ENCODE measurements at regions of chr2 and their contacts with region 1.

Region 1: GRCh38 chr2:74876081-74876886 is 42.4 kb downstream of the HK2 start:
- DNase-seq: peak; percentile 48 to 73 (median 66)
- H3K4me3 ChIP-seq: no peak overlapping the region
- H3K4me3 Mint-ChIP-seq: no peak overlapping the region
- H3K27ac ChIP-seq: no peak overlapping the region
- H3K27ac Mint-ChIP-seq: peak overlapping the region in 3 of 7 donors; percentile 22 to 76 (median 53)
- H3K4me1 ChIP-seq: peaks cover 3% of the 10 kb centered on the region
- H3K4me1 Mint-ChIP-seq: peaks cover 0 to 7% (median 4%) of the 10 kb centered on the region in 4 donors
- H3K27me3 ChIP-seq: no peaks in the 10 kb centered on the region
- H3K27me3 Mint-ChIP-seq: no peaks in the 10 kb centered on the region

Region 2: DNA sequence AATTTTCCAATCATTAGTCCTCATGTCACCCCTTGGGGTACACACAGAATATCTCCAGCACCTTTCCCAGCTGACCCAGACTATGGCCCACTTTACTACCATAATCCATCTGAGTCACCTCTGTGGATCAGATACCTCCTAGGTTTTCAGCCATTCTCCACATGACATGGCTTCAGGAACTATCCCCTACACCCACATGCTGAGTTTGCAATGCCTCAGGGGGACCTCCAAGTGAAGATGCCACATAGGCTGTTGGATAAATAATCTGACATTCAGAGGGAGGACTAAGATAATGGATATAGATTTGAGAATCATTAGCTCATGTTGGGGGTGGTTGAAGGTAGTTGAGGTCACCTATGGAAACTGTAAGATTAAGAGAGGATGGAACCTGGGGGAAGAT is 177.0 kb before region 1 on chr2:
- CTCF ChIA-PET with region 1: interaction called, 10 read pairs
- POLR2A ChIA-PET with region 1: no interaction called
- intact Hi-C with region 1: no loop called
- DNase-seq: no peak
- H3K4me3 ChIP-seq: no peak overlapping the region
- H3K4me3 Mint-ChIP-seq: no peak overlapping the region
- H3K27ac ChIP-seq: no peak overlapping the region
- H3K27ac Mint-ChIP-seq: no peak overlapping the region
- H3K4me1 ChIP-seq: no peaks in the 10 kb centered on the region
- H3K4me1 Mint-ChIP-seq: peaks cover 0 to 2% (median 0%) of the 10 kb centered on the region in 4 donors
- H3K27me3 ChIP-seq: no peaks in the 10 kb centered on the region
- H3K27me3 Mint-ChIP-seq: peaks cover 0 to 1% of the 10 kb centered on the region in 2 donors

Region 3: GRCh38 chr2:74715078-74715791 is 161.0 kb before region 1 on chr2:
- CTCF ChIA-PET with region 1: interaction called, 287 read pairs
- POLR2A ChIA-PET with region 1: interaction called, 5 read pairs
- intact Hi-C with region 1: loop called (anchors 1 kb)
- DNase-seq: peak; percentile 70 to 78 (median 75)
- H3K4me3 ChIP-seq: peak overlapping the region in 1 of 2 donors; percentile 34
- H3K4me3 Mint-ChIP-seq: peak overlapping the region; percentile 84 to 92 (median 88)
- H3K27ac ChIP-seq: no peak overlapping the region
- H3K27ac Mint-ChIP-seq: peak overlapping the region in 2 of 7 donors; percentile 29 to 46
- H3K4me1 ChIP-seq: peaks cover 6% of the 10 kb centered on the region
- H3K4me1 Mint-ChIP-seq: peaks cover 5 to 10% (median 7%) of the 10 kb centered on the region in 4 donors
- H3K27me3 ChIP-seq: peaks cover 15% of the 10 kb centered on the region
- H3K27me3 Mint-ChIP-seq: peaks cover 6 to 10% of the 10 kb centered on the region in 2 donors

Region 4: DNA sequence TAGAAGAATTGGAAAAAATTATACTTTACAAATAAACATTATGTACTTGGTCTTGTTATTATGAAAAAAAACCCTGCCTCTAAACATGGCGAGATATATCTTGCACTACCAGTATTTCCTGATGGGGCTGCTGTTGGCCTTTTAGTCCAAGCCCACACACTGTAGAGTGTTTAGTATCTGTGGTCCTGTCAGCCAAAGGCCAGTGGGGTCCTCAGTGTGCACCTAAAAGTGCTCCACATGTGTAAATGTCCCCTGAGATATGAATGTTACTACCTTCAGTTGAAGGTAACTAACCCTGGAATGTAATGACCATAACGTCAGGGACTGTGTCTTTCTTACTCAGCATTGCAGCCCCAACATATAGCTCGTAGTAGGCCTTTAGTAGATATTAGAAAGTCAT is 113.5 kb before region 1 on chr2:
- CTCF ChIA-PET with region 1: interaction called, 12 read pairs
- POLR2A ChIA-PET with region 1: no interaction called
- intact Hi-C with region 1: no loop called
- DNase-seq: no peak
- H3K4me3 ChIP-seq: no peak overlapping the region
- H3K4me3 Mint-ChIP-seq: no peak overlapping the region
- H3K27ac ChIP-seq: no peak overlapping the region
- H3K27ac Mint-ChIP-seq: no peak overlapping the region
- H3K4me1 ChIP-seq: no peaks in the 10 kb centered on the region
- H3K4me1 Mint-ChIP-seq: peaks cover 0 to 12% (median 6%) of the 10 kb centered on the region in 4 donors
- H3K27me3 ChIP-seq: no peaks in the 10 kb centered on the region
- H3K27me3 Mint-ChIP-seq: peaks cover 0 to 3% of the 10 kb centered on the region in 2 donors

Region 5: GRCh38 chr2:74845217-74846011 is 30.9 kb before region 1 on chr2:
- CTCF ChIA-PET with region 1: interaction called, 147 read pairs
- POLR2A ChIA-PET with region 1: interaction called, 7 read pairs
- intact Hi-C with region 1: no loop called
- DNase-seq: peak in 1 of 5 donors; percentile 57
- H3K4me3 ChIP-seq: no peak overlapping the region
- H3K4me3 Mint-ChIP-seq: peak overlapping the region; percentile 75 to 94 (median 80)
- H3K27ac ChIP-seq: peak overlapping the region; percentile 12
- H3K27ac Mint-ChIP-seq: peak overlapping the region; percentile 85 to 94 (median 90)
- H3K4me1 ChIP-seq: peaks cover 98% of the 10 kb centered on the region
- H3K4me1 Mint-ChIP-seq: peaks cover 62 to 100% (median 89%) of the 10 kb centered on the region in 4 donors
- H3K27me3 ChIP-seq: no peaks in the 10 kb centered on the region
- H3K27me3 Mint-ChIP-seq: no peaks in the 10 kb centered on the region

Region 6: DNA sequence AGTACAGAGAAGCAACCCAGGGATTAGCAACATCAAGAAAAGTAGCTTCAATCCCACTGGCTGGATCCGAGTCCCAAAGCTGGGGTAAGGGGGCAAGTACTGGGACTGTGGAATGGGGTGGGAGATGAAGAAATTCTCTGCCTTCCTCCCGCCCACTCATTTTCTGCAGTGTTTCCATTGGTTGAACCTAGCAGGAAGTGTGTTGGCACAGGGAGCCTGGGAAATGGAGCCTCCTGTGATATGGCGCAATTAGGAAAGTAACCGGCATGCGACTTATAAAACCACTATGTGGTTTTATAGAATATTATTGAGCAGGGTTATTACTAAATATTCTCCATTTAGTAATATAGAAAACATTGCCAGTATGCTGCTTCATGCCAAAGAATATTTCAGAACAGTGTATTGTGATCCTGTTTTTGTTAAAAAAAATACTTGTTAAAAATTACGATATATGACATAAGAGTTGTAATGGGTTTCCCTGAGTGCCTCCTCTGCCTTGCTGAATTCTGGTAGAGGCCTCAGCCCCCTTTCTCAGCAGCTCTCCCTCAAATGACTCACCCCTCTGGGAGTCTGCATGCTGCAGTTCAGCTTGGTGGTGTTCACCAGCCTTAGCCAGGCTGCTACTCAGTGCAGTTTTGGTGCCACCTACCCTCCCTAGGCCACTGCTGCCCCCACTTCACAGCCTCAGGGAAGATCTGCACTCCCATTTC is 18.1 kb after region 1 on chr2:
- CTCF ChIA-PET with region 1: no interaction called
- POLR2A ChIA-PET with region 1: no interaction called
- intact Hi-C with region 1: no loop called
- DNase-seq: no peak
- H3K4me3 ChIP-seq: no peak overlapping the region
- H3K4me3 Mint-ChIP-seq: no peak overlapping the region
- H3K27ac ChIP-seq: no peak overlapping the region
- H3K27ac Mint-ChIP-seq: no peak overlapping the region
- H3K4me1 ChIP-seq: no peaks in the 10 kb centered on the region
- H3K4me1 Mint-ChIP-seq: no peaks in the 10 kb centered on the region
- H3K27me3 ChIP-seq: no peaks in the 10 kb centered on the region
- H3K27me3 Mint-ChIP-seq: no peaks in the 10 kb centered on the region